ENCODE measurements at regions of chr2 and their contacts with region 1.

Region 1: DNA sequence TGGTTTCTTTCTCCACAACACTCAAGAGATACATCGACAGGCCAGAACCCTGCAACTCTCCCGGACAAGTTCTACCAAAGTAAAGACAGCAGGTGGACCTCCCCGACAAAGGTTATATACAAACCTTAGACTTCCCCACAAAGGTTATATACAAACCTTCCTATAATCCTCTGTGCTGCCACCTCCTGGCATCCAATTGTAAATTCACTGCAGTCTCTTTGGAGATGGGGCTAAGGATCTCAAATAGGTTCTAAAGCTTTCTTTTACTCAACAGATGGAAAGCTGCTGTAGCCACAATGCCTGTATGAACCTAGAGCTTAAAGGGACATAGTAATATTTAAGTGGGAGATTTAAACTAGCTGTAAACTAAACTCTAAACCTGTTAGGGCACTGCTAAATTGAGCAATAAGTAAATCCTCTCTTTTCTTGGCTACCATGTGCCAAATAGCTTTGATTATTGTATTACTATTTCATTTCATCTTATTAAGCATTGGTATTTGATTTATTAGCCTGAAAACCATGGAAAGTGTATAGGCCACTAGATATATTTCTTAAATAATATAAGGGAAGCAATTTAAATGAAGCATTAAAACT is 9.8 kb upstream of the MREG start:
- DNase-seq: peak; percentile 46
- H3K4me3 ChIP-seq: no peak overlapping the region
- H3K27ac ChIP-seq: no peak overlapping the region
- H3K4me1 ChIP-seq: no peaks in the 10 kb centered on the region
- H3K27me3 ChIP-seq: no peaks in the 10 kb centered on the region
- CTCF ChIP-seq: peak; percentile 42 to 55 (median 45)
- EP300 ChIP-seq: no peak
- POLR2A ChIP-seq: no peak

Region 2: GRCh38 chr2:215698566-215698965 is 324.6 kb before region 1 on chr2:
- in situ Hi-C with region 1: no loop called
- intact Hi-C with region 1: no loop called
- DNase-seq: no peak
- H3K4me3 ChIP-seq: no peak overlapping the region
- H3K27ac ChIP-seq: no peak overlapping the region
- H3K4me1 ChIP-seq: peaks cover 0 to 8% (median 0%) of the 10 kb centered on the region in 4 donors
- H3K27me3 ChIP-seq: no peaks in the 10 kb centered on the region
- CTCF ChIP-seq: no peak
- EP300 ChIP-seq: no peak
- POLR2A ChIP-seq: no peak

Region 3: DNA sequence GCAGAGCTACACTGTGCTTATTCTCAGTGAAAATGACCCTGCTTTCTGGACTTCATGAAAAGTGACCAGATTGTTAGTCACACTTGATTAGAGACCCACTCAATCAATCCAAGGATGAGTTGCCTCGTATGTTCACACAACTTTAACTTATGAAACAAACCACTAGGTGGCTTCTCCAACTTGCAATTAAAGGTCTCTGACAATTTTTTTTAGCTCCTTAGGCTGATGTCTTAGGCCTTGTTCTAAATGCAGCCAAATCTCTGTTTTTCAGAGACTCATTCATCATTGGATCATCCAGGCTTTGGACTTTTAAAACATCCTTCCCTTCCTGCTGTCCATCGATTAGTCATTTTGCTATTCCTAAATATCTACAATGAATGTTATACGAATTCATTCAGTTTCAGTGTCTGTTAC is 73.2 kb before region 1 on chr2:
- in situ Hi-C with region 1: loop called in 1 of 4 experiments (anchors 10 kb)
- intact Hi-C with region 1: no loop called
- DNase-seq: no peak
- H3K4me3 ChIP-seq: no peak overlapping the region
- H3K27ac ChIP-seq: no peak overlapping the region
- H3K4me1 ChIP-seq: no peaks in the 10 kb centered on the region
- H3K27me3 ChIP-seq: no peaks in the 10 kb centered on the region
- CTCF ChIP-seq: peak; percentile 34 to 49 (median 40)
- EP300 ChIP-seq: no peak
- POLR2A ChIP-seq: no peak

Measured in transverse colon (tissue), 4 donors.